Heart left ventricle (tissue), 16 donors: ENCODE measurements at regions of chr2 and their contacts with region 1.

Region 1: DNA sequence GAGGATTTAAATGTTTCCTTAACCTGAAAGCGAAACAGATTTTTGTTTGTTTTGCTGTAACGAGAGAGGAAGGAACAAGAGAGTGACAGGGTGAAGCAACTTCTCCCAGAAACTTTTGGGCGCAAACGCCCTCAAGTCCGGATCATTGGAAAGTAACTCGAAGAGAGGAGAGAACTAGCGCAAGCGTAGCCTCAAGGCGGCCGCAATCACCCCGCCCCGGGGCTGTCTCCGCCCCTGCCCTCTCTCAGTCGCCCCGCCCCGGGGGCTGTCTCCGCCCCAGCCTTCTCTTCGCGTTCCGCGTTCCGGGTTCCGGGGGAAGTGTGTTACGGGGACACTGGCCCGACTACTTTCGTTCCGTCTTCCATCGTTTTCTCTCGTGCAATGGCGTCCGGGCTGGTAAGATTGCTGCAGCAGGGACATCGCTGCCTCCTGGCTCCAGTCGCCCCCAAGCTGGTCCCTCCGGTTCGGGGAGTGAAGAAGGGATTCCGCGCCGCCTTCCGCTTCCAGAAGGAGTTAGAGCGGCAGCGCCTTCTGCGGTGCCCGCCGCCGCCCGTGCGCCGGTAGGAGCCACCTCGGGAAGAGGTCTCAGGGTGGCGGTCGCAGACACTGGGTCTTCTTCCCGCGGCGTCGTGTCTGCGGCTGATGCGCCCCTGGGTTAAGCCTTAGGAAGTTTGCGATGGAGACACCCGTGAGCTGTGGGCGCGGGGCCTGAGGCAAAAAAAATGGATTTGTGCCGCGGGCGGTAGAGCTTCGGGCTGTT is at the start of gene MRPL44:
- DNase-seq: peak; percentile 96 to 99 (median 97)
- ATAC-seq: peak; percentile 100
- H3K4me3 ChIP-seq: peak within 1 kb of the TSS; percentile 54 to 98 (median 90)
- H3K27ac ChIP-seq: peak within 1 kb of the TSS; percentile 53 to 95 (median 84)
- H3K4me1 ChIP-seq: peaks cover 12 to 55% (median 44%) of the 10 kb centered on the region in 12 donors
- H3K27me3 ChIP-seq: no peaks in the 10 kb centered on the region
- CTCF ChIP-seq: peak in 3 of 12 donors; percentile 7 to 20 (median 15)
- POLR2A ChIP-seq: peak in 1 of 2 donors; percentile 73
- total RNA-seq, gene MRPL44: 33.4 to 54.2 (median 38.2) TPM

Region 2: DNA sequence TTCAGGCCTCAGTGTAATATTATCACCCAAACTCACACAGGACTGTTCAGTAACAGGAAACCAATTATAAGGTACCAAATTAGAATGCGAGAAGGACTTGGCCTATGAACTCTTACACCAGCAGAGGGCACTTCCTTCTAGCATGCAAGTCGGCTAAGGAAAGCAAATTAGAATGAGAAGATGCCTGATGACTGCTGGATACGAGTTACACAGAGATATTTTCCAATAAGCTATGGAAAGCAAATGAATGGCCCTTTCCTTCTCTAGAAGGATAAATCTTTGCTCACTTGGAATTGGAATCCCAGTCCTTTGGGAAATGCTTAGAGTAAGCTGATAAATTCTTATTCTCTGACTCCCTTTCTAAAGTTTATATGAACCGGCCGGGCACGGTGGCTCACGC is 229.7 kb before region 1 on chr2:
- intact Hi-C with region 1: loop called in 1 of 10 experiments (anchors 5 kb)
- DNase-seq: peak in 1 of 5 donors; percentile 11
- ATAC-seq: peak in 2 of 4 donors; percentile 27 to 39
- H3K4me3 ChIP-seq: no peak overlapping the region
- H3K27ac ChIP-seq: no peak overlapping the region
- H3K4me1 ChIP-seq: peaks cover 0 to 29% (median 18%) of the 10 kb centered on the region in 12 donors
- H3K27me3 ChIP-seq: no peaks in the 10 kb centered on the region
- CTCF ChIP-seq: peak; percentile 12 to 60 (median 42)
- POLR2A ChIP-seq: no peak

Region 3: DNA sequence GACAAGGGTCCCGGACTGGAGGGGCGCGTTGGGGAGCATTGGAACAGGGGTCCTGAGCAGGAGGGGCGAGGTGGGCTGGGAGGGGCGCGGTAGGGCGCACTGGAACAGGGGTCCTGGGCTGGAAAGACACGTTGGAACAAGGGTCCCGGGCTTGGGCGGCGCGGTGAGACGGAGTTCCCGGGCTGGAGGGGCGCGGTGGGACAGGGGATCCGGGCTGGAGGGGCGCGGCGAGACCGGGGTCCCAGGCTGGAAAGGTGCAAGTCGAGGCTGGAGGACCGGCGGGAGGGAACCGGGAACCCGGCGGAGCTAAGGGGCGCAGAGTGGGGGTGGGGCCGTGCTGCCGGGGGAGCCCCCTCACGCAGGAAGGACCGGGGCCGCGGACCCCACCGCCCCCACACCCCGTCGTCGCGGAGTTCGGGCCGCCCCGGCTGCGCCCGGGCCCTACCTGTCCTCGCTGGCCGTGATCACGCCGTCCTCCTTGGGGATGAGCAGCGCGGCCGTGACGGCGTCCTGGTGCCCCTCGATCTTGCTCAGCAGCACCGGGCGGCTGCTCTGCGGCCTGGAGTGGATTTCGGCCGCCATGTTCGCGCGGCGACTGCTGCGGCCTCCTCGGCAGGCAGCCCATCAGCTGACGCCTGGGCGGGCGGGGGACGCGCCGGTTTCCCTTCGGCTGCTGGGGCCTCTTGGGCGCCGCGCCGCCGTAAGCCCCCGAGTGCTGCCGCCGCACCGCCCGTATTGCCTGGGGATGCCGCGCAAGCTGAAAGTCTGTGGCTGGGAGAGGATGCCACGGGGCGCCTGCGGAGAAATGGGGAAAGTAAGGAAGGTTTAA is 12.4 kb before region 1 on chr2 and contains the start of gene WDFY1:
- intact Hi-C with region 1: loop called in 1 of 10 experiments (anchors 1 kb)
- DNase-seq: peak; percentile 90 to 96 (median 93)
- ATAC-seq: peak; percentile 87 to 98 (median 96)
- H3K4me3 ChIP-seq: peak within 1 kb of the TSS; percentile 70 to 100 (median 96)
- H3K27ac ChIP-seq: peak within 1 kb of the TSS; percentile 89 to 98 (median 95)
- H3K4me1 ChIP-seq: peaks cover 0 to 74% (median 29%) of the 10 kb centered on the region in 12 donors
- H3K27me3 ChIP-seq: no peaks in the 10 kb centered on the region
- CTCF ChIP-seq: peak in 1 of 12 donors; percentile 8
- POLR2A ChIP-seq: peak in 1 of 2 donors; percentile 70
- total RNA-seq, gene WDFY1: 13.2 to 30.5 (median 14.3) TPM